ENCODE measurements at regions of chr18 and their contacts with region 1.

Region 1: GRCh38 chr18:55577812-55578539 is 10.0 kb downstream of the TCF4 start:
- DNase-seq: no peak
- ATAC-seq: no peak
- H3K4me3 ChIP-seq: no peak overlapping the region
- H3K27ac ChIP-seq: no peak overlapping the region
- H3K4me1 ChIP-seq: peaks cover 0 to 68% (median 34%) of the 10 kb centered on the region in 9 donors
- H3K27me3 ChIP-seq: no peaks in the 10 kb centered on the region
- CTCF ChIP-seq: peak in 4 of 9 donors; percentile 12 to 32 (median 18)

Region 2: DNA sequence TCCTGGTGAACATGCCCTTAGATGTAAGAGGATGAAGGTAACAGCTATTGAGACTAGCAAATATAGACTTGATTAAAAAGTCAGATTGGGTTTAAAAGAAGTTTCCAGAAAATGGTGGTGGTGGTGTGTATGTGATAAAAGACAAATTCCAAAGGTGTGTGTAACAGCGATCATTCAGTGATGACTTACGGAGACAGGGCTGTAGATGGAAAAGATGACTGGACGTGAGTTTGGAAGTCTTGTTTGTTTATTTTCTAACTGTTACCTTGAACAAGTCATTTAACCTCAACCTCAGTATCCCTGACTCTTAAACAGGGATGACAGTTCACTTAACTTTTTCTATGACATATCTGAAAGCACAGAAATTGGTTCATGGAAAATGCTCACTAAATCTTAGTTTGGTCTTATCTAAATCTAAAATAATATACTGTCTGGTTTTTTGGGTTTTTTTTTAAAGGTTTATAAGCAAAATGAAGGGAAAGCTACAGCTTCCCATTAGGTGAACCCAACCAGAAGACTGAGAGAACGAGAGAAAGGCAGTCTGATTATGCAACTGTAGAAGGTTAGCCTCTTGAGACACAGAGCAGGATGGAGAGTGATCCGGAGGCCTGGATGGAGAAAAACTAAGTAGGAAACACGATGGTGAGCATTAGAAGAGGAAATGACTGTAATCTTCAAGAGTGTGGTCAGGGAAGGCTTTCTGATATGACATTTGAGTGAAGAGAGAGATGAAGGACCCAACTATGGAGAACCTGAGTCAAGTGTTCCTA is 61.9 kb before region 1 on chr18:
- intact Hi-C with region 1: loop called in 2 of 10 experiments (anchors 5 to 10 kb)
- DNase-seq: no peak
- ATAC-seq: peak in 3 of 8 donors; percentile 21 to 41 (median 40)
- H3K4me3 ChIP-seq: no peak overlapping the region
- H3K27ac ChIP-seq: peak overlapping the region in 7 of 10 donors; percentile 6 to 73 (median 17)
- H3K4me1 ChIP-seq: peaks cover 0 to 60% (median 32%) of the 10 kb centered on the region in 9 donors
- H3K27me3 ChIP-seq: no peaks in the 10 kb centered on the region
- CTCF ChIP-seq: no peak

Region 3: GRCh38 chr18:55546851-55547704 is 30.9 kb before region 1 on chr18:
- intact Hi-C with region 1: loop called in 1 of 10 experiments (anchors 2 kb)
- DNase-seq: peak in 1 of 2 donors; percentile 26
- ATAC-seq: peak in 6 of 8 donors; percentile 68 to 81 (median 76)
- H3K4me3 ChIP-seq: peak overlapping the region in 1 of 10 donors; percentile 1
- H3K27ac ChIP-seq: peak overlapping the region in 6 of 10 donors; percentile 0 to 43 (median 34)
- H3K4me1 ChIP-seq: peaks cover 0 to 34% (median 21%) of the 10 kb centered on the region in 9 donors
- H3K27me3 ChIP-seq: no peaks in the 10 kb centered on the region
- CTCF ChIP-seq: no peak

Region 4: GRCh38 chr18:55634545-55634944 is 56.6 kb after region 1 on chr18:
- intact Hi-C with region 1: loop called in 1 of 10 experiments (anchors 2 kb)
- DNase-seq: no peak
- ATAC-seq: no peak
- H3K4me3 ChIP-seq: no peak overlapping the region
- H3K27ac ChIP-seq: no peak overlapping the region
- H3K4me1 ChIP-seq: no peaks in the 10 kb centered on the region
- H3K27me3 ChIP-seq: no peaks in the 10 kb centered on the region
- CTCF ChIP-seq: no peak